HCT116 (cell line): ENCODE measurements at regions of chr16 and their contacts with region 1.

Region 1: GRCh38 chr16:5415123-5415522 is 317.5 kb upstream of the EEF2KMT start:
- DNase-seq: peak; percentile 13
- ATAC-seq: peak; percentile 63
- H3K4me3 ChIP-seq: no peak overlapping the region
- H3K27ac ChIP-seq: no peak overlapping the region
- H3K4me1 ChIP-seq: no peaks in the 10 kb centered on the region
- H3K27me3 ChIP-seq: peaks cover 20% of the 10 kb centered on the region; the same call in 1 of the 2 replicates
- CTCF ChIP-seq: peak in 2 of 3 experiments; percentile 10 to 31; a peak in 1 of 6 replicates
- POLR2A ChIP-seq: no peak
- RAD21 ChIP-seq: peak; percentile 20; the same call in 1 of the 2 replicates

Region 2: GRCh38 chr16:5490499-5490898 is 75.4 kb after region 1 on chr16:
- CTCF ChIA-PET with region 1: interaction called, 4 read pairs
- POLR2A ChIA-PET with region 1: no interaction called
- RAD21 ChIA-PET with region 1: no interaction called
- intact Hi-C with region 1: loop called (anchors 2 kb)
- DNase-seq: peak; percentile 15
- ATAC-seq: peak; percentile 72
- H3K4me3 ChIP-seq: no peak overlapping the region
- H3K27ac ChIP-seq: no peak overlapping the region
- H3K4me1 ChIP-seq: no peaks in the 10 kb centered on the region
- H3K27me3 ChIP-seq: peaks cover 17% of the 10 kb centered on the region
- CTCF ChIP-seq: peak; percentile 51 to 90 (median 79); a peak in 5 of 6 replicates
- POLR2A ChIP-seq: no peak
- RAD21 ChIP-seq: peak; percentile 72